ENCODE measurements at regions of chr7 and their contacts with region 1.

Region 1: DNA sequence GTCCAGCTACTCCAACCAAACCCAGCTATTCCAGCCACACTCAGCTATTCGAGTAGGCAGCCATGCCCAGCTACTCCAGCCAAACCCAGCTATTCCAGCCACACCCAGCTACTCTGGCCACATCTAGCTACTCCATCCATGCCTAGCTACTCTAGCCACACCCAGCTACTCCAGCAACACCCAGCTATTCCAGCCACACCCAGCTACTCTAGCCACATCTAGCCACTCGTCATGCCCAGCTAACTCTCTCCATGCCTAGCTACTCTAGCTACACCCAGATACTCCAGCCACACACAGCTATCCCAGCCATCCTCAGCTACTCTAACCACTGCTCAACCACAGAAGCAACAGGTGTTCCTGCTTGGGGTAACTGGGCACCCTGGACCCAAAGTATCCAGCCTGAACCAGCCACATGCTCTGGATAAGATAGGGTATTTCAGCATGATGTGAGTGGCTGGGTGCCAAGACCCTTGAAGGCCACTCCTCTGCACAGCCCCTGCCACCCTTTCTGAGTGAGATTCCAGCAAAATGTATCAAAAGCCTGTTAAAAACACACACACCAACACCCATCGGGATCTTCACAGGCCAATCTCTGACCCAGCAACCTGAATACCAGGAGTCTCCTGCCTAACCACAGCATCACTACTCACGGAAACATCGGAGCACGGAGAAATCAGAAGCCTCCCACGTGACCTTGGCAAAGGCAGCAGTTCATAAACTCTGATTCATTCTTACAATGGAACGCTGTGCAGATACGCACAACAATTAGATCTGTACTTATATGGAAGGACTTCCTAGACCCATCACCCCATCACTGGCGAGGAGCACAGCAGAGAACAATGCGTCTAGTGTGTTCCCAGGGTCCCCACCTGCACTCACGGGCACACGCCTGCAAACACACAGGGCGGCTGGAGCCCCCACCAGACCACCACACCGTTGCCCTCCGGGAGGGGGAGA is 51.8 kb upstream of the DNAAF5 start:
- DNase-seq: peak in 1 of 5 donors; percentile 77
- ATAC-seq: peak; percentile 77 to 92 (median 83)
- H3K4me3 ChIP-seq: no peak overlapping the region
- H3K27ac ChIP-seq: peak overlapping the region in 5 of 12 donors; percentile 11 to 82 (median 58)
- H3K4me1 ChIP-seq: peaks cover 0 to 7% (median 0%) of the 10 kb centered on the region in 12 donors
- H3K27me3 ChIP-seq: no peaks in the 10 kb centered on the region
- CTCF ChIP-seq: no peak
- POLR2A ChIP-seq: no peak

Region 2: GRCh38 chr7:712381-713138 is 37.8 kb after region 1 on chr7:
- intact Hi-C with region 1: loop called in 4 of 10 experiments (anchors 2 to 5 kb)
- DNase-seq: peak in 1 of 5 donors; percentile 15
- ATAC-seq: no peak
- H3K4me3 ChIP-seq: peak overlapping the region; percentile 39 to 78 (median 62)
- H3K27ac ChIP-seq: peak overlapping the region in 3 of 12 donors; percentile 52 to 61 (median 59)
- H3K4me1 ChIP-seq: peaks cover 0 to 18% (median 0%) of the 10 kb centered on the region in 12 donors
- H3K27me3 ChIP-seq: no peaks in the 10 kb centered on the region
- CTCF ChIP-seq: no peak
- POLR2A ChIP-seq: no peak